ENCODE measurements at regions of chr11 and their contacts with region 1.

Region 1: DNA sequence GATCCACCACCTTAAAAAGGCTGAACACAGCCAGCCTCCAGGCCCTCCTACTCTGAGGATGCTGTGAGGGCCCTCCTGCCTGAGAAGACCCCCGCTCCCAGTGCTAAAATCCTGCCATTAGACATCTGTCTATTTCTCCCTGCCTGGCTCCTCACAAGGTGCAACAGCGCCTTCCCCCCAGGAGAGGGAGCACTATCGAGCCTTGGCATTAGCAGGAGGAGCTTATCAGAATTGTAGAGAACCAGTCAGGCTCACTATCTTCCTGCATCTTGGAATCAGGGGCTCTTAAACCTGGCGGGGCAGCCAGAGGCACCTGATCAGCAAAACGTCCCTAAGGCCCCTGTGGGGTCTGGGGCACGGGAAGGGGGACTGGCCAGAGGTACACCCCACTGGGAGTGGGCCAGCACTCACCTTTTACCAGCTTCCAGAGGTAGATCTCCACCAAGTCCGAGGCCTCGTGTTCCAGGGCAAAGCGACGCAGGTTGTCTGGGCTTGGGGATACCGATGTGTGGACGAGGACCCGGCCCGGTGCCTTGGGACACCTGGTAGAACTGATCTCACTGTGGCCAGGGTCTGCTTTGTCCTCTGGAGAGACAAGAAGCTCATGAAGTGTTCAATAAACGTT is 28.7 kb downstream of the CHRDL2 start:
- DNase-seq: peak; percentile 75
- ATAC-seq: peak; percentile 83
- H3K4me3 Mint-ChIP-seq: no peak overlapping the region
- H3K27ac Mint-ChIP-seq: no peak overlapping the region
- H3K4me1 Mint-ChIP-seq: no peaks in the 10 kb centered on the region
- H3K27me3 Mint-ChIP-seq: peaks cover 2% of the 10 kb centered on the region

Region 2: GRCh38 chr11:74388678-74389327 is 313.7 kb before region 1 on chr11:
- CTCF ChIA-PET with region 1: no interaction called
- POLR2A ChIA-PET with region 1: no interaction called
- intact Hi-C with region 1: no loop called
- DNase-seq: peak; percentile 81
- ATAC-seq: peak; percentile 81
- H3K4me3 Mint-ChIP-seq: no peak overlapping the region
- H3K27ac Mint-ChIP-seq: peak overlapping the region; percentile 75
- H3K4me1 Mint-ChIP-seq: peaks cover 41% of the 10 kb centered on the region
- H3K27me3 Mint-ChIP-seq: no peaks in the 10 kb centered on the region

Region 3: GRCh38 chr11:74717221-74717969 is 14.9 kb after region 1 on chr11:
- CTCF ChIA-PET with region 1: interaction called, 152 read pairs
- POLR2A ChIA-PET with region 1: no interaction called
- intact Hi-C with region 1: no loop called
- DNase-seq: no peak
- ATAC-seq: no peak
- H3K4me3 Mint-ChIP-seq: no peak overlapping the region
- H3K27ac Mint-ChIP-seq: no peak overlapping the region
- H3K4me1 Mint-ChIP-seq: peaks cover 7% of the 10 kb centered on the region
- H3K27me3 Mint-ChIP-seq: peaks cover 2% of the 10 kb centered on the region

Region 4: DNA sequence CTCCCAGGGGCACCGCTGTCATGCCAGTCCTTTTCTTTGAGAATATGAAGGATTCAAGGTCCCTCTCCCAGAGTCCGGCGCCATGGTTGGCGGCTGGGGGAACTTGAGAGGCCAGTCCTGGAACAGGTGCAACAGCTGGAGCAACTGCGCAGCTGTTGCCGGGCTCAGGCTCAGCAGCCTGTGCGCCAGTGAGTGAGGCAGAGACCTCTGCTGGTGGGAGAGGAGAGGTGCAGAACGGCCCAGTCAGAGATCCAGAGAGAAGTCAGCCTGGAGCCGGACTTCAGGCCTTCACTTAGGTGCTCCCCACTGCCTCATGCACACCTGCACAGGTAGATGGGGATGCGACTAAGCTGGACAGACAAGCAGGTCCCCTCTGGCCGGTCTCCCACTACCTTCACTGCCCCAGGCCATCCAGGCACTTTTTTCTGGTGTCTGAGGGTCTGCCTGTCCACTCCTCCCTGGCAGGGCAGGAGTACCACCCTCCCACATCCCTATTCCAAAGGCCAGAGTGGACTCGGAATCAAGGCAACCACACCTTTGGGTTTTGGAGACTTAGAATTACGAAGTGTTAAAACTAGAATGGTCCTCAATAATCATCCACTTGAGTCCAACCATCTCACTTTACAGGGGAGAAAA is 24.2 kb after region 1 on chr11:
- CTCF ChIA-PET with region 1: interaction called, 152 read pairs
- POLR2A ChIA-PET with region 1: interaction called, 3 read pairs
- intact Hi-C with region 1: loop called (anchors 1 kb)
- DNase-seq: peak; percentile 78
- ATAC-seq: peak; percentile 96
- H3K4me3 Mint-ChIP-seq: no peak overlapping the region
- H3K27ac Mint-ChIP-seq: no peak overlapping the region
- H3K4me1 Mint-ChIP-seq: peaks cover 5% of the 10 kb centered on the region
- H3K27me3 Mint-ChIP-seq: peaks cover 34% of the 10 kb centered on the region

Region 5: DNA sequence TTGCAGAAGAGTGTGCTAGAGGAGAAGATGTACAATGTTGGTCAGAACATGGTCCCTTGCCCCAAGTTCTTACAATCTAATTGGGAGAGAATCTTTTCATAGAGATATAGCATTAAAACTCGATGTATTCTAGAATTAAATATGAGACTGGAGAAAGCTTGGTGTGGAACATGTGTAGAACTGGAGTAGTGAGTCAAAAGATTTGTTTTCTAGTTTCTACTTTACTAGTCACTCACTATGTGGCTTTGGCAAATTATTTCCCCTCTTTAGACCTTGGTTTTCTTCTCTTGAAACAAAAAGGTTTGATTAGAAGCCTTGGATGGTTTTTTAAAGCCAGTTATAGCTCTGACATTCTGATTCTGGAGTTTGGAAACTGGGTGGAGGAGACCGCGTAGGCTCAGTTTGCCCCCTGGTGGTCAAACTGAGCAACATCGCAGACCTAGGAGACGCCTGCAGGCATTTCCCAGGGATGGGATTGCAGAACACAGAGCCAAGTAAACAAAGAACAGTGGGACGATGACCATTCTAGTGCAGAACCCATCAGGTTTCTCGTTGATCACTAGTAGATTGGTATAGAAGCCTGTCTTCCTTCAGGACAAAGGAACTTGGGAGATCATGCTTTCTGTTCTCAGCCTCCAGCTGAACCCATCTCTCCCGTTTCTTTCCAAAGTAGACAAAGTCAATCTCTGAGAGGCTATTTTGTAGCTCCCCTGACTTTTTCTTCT is 37.2 kb after region 1 on chr11:
- CTCF ChIA-PET with region 1: interaction called, 45 read pairs
- POLR2A ChIA-PET with region 1: no interaction called
- intact Hi-C with region 1: loop called (anchors 1 kb)
- DNase-seq: peak; percentile 64
- ATAC-seq: peak; percentile 92
- H3K4me3 Mint-ChIP-seq: no peak overlapping the region
- H3K27ac Mint-ChIP-seq: no peak overlapping the region
- H3K4me1 Mint-ChIP-seq: peaks cover 12% of the 10 kb centered on the region
- H3K27me3 Mint-ChIP-seq: peaks cover 26% of the 10 kb centered on the region

Region 6: GRCh38 chr11:74870485-74870884 is 168.0 kb after region 1 on chr11:
- CTCF ChIA-PET with region 1: interaction called, 4 read pairs
- POLR2A ChIA-PET with region 1: no interaction called
- intact Hi-C with region 1: loop called (anchors 1 kb)
- DNase-seq: no peak
- ATAC-seq: peak; percentile 44
- H3K4me3 Mint-ChIP-seq: no peak overlapping the region
- H3K27ac Mint-ChIP-seq: no peak overlapping the region
- H3K4me1 Mint-ChIP-seq: no peaks in the 10 kb centered on the region
- H3K27me3 Mint-ChIP-seq: no peaks in the 10 kb centered on the region

Region 7: GRCh38 chr11:75313513-75314272 is 611.2 kb after region 1 on chr11:
- CTCF ChIA-PET with region 1: no interaction called
- POLR2A ChIA-PET with region 1: no interaction called
- intact Hi-C with region 1: no loop called
- DNase-seq: no peak
- ATAC-seq: no peak
- H3K4me3 Mint-ChIP-seq: no peak overlapping the region
- H3K27ac Mint-ChIP-seq: no peak overlapping the region
- H3K4me1 Mint-ChIP-seq: peaks cover 7% of the 10 kb centered on the region
- H3K27me3 Mint-ChIP-seq: no peaks in the 10 kb centered on the region